ENCODE measurements at regions of chr14 and their contacts with region 1.

Region 1: DNA sequence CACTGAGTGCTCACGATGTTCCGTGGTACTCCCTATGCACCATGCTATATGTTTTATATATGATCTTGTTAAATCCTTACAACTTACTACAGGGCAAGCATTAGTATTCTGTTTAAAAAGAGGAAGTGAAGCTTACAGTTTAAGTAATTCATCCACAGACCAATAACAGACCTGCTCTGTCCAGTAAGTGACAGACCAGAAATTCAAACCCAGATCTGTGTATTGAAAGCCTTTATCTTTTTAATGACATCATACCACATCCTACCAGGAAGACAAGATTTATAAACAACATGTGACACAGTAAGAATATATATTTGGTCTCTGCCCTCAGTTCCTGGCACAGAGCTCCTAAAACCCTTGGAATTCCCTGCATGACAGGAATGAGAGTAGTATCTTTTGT is 206.5 kb downstream of the STXBP6 start:
- DNase-seq: no peak
- ATAC-seq: no peak
- H3K4me3 ChIP-seq: no peak overlapping the region
- H3K27ac ChIP-seq: no peak overlapping the region
- H3K4me1 ChIP-seq: 0 out of 2 replicates have a peak, but pooled peaks cover 1% of the 10 kb centered on the region
- H3K27me3 ChIP-seq: no peaks in the 10 kb centered on the region
- CTCF ChIP-seq: no peak
- POLR2A ChIP-seq: no peak
- RAD21 ChIP-seq: no peak

Region 2: DNA sequence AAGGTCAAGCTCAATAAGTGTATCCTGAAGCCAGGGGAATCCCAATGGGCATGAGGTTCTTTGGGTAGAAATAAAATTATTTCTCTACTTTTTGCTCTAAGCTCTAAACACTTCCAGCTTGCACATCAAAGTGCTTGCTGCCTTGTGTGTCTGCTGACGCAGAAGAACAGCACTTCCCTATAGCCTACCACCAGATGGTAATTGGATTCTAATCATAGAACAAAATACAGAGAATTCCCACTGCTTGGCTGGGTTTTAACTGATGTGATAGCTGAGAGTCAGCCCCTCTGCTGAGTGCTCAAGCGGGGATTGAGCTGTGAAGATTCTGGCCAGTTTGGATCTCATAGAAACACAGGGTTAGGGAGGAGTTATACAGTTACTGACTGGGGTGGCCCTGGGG is 77.1 kb before region 1 on chr14:
- CTCF ChIA-PET with region 1: no interaction called
- POLR2A ChIA-PET with region 1: no interaction called
- dilution Hi-C with region 1: no loop called
- in situ Hi-C with region 1: no loop called
- intact Hi-C with region 1: no loop called
- DNase-seq: no peak
- ATAC-seq: no peak
- H3K4me3 ChIP-seq: no peak overlapping the region
- H3K27ac ChIP-seq: no peak overlapping the region
- H3K4me1 ChIP-seq: no peaks in the 10 kb centered on the region
- H3K27me3 ChIP-seq: no peaks in the 10 kb centered on the region
- CTCF ChIP-seq: no peak
- POLR2A ChIP-seq: no peak
- RAD21 ChIP-seq: no peak

Region 3: GRCh38 chr14:24959791-24960331 is 116.4 kb after region 1 on chr14:
- CTCF ChIA-PET with region 1: no interaction called
- POLR2A ChIA-PET with region 1: no interaction called
- dilution Hi-C with region 1: no loop called
- in situ Hi-C with region 1: no loop called
- intact Hi-C with region 1: loop called (anchors 5 kb)
- DNase-seq: peak; percentile 55
- ATAC-seq: peak; percentile 73
- H3K4me3 ChIP-seq: no peak overlapping the region
- H3K27ac ChIP-seq: peak overlapping the region; percentile 86; the same call in 1 of the 2 replicates
- H3K4me1 ChIP-seq: peaks cover 14% of the 10 kb centered on the region
- H3K27me3 ChIP-seq: no peaks in the 10 kb centered on the region
- CTCF ChIP-seq: no peak
- POLR2A ChIP-seq: no peak
- RAD21 ChIP-seq: no peak

Region 4: DNA sequence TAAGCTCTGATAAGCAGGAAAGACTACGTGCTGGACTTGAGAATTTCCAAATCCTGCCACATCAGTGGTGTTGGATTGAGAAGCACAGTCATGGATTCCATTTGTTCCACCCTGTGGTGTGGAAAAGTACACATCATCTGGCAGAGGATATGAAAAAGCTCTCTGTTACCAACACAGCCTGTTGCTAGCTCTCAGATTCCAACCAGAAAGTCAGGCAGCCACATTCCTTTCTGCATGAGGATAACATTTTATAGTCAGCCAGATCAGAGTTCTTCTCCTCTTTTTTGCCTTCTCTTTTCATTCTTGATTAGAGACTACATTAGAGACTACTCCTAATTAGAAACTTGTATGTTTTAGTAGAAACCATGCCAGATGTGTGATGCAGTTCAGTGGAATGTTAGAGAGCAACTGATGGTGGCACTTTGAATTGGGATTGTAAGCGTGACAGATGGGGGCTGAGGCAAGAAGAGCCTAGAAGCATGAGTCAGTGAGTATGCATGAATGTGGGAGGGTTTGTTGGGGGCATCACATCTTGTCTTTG is 267.6 kb after region 1 on chr14:
- CTCF ChIA-PET with region 1: no interaction called
- POLR2A ChIA-PET with region 1: no interaction called
- dilution Hi-C with region 1: no loop called
- in situ Hi-C with region 1: no loop called
- intact Hi-C with region 1: loop called (anchors 10 kb)
- DNase-seq: peak; percentile 98
- ATAC-seq: peak; percentile 90
- H3K4me3 ChIP-seq: no peak overlapping the region
- H3K27ac ChIP-seq: peak overlapping the region; percentile 66; the same call in 1 of the 2 replicates
- H3K4me1 ChIP-seq: peaks cover 9% of the 10 kb centered on the region; the same call in 1 of the 2 replicates
- H3K27me3 ChIP-seq: no peaks in the 10 kb centered on the region
- CTCF ChIP-seq: no peak
- POLR2A ChIP-seq: no peak
- RAD21 ChIP-seq: 0 out of 2 replicates have a peak, but pooled peaks have one; percentile 6